Activated CD4-positive, alpha-beta memory T cell treated with anti-CD3 and anti-CD28 coated beads for 36 hours (primary cell): ENCODE measurements at regions of chr14 and their contacts with region 1.

Region 1: GRCh38 chr14:58280954-58281787 is 17.2 kb upstream of the ARID4A start:
- DNase-seq: peak; percentile 56
- H3K4me3 Mint-ChIP-seq: peak overlapping the region; percentile 37
- H3K27ac Mint-ChIP-seq: peak overlapping the region; percentile 91
- H3K4me1 Mint-ChIP-seq: peaks cover 66% of the 10 kb centered on the region
- H3K27me3 Mint-ChIP-seq: no peaks in the 10 kb centered on the region

Region 2: GRCh38 chr14:58239244-58240195 is 41.7 kb before region 1 on chr14:
- CTCF ChIA-PET with region 1: interaction called, 3 read pairs
- POLR2A ChIA-PET with region 1: interaction called, 4 read pairs
- intact Hi-C with region 1: loop called (anchors 1 kb)
- DNase-seq: peak; percentile 84
- H3K4me3 Mint-ChIP-seq: no peak overlapping the region
- H3K27ac Mint-ChIP-seq: no peak overlapping the region
- H3K4me1 Mint-ChIP-seq: peaks cover 23% of the 10 kb centered on the region
- H3K27me3 Mint-ChIP-seq: no peaks in the 10 kb centered on the region

Region 3: GRCh38 chr14:58270628-58271027 is 10.5 kb before region 1 on chr14:
- CTCF ChIA-PET with region 1: no interaction called
- POLR2A ChIA-PET with region 1: interaction called, 3 read pairs
- intact Hi-C with region 1: loop called (anchors 1 kb)
- DNase-seq: no peak
- H3K4me3 Mint-ChIP-seq: no peak overlapping the region
- H3K27ac Mint-ChIP-seq: peak overlapping the region; percentile 72
- H3K4me1 Mint-ChIP-seq: peaks cover 38% of the 10 kb centered on the region
- H3K27me3 Mint-ChIP-seq: no peaks in the 10 kb centered on the region